Activated CD8-positive, alpha-beta T cell treated with anti-CD3 and anti-CD28 coated beads for 36 hours (primary cell): ENCODE measurements at regions of chr6 and their contacts with region 1.

Region 1: DNA sequence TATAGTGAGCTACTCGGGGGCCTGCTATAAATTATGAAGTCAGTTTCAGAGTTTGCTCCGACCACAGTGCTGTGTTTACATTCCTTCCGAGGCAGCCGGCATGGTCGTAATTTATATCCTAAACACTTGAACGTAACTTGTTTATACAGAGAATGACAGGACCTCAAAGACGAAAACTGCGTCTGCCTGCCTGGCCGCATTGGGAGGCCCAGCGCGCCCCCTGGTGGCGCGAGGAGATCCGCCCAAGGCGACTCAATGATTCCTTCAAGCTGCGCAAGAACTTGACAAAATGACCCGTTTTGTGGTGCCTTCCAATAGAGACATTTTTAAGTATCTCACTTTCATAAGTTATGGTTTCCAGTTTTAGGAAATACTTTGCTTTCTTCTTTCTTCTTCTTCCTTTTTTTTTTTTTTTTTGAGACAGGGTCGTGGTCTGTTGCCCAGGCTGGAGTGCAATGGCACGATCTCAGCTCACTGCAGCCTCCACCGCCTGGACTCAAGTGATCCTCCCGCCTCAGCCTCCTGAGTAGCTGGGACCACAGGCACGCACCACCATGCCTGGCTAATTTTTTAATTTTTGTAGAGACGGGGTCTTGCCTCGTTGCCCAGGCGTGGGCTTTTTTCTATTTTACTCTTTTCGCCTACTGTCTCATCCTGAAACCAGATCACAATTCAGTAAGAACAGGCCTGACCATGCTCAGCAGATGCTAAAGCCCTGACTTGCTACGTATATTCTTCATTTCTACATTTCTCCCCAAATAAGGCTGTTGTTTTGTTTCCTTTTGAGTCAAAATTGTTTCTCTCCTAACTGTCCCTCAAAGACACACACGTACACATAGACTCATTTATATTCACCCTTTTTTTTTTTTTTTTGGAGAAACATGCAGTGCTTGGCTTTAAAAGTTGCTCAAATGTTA is 7.8 kb downstream of the FOXF2 start:
- DNase-seq: peak; percentile 84
- ATAC-seq: peak; percentile 79
- H3K4me3 Mint-ChIP-seq: no peak overlapping the region
- H3K27ac Mint-ChIP-seq: no peak overlapping the region
- H3K4me1 Mint-ChIP-seq: peaks cover 4% of the 10 kb centered on the region
- H3K27me3 Mint-ChIP-seq: peaks cover 45% of the 10 kb centered on the region
- CTCF ChIP-seq: peak; percentile 92

Region 2: DNA sequence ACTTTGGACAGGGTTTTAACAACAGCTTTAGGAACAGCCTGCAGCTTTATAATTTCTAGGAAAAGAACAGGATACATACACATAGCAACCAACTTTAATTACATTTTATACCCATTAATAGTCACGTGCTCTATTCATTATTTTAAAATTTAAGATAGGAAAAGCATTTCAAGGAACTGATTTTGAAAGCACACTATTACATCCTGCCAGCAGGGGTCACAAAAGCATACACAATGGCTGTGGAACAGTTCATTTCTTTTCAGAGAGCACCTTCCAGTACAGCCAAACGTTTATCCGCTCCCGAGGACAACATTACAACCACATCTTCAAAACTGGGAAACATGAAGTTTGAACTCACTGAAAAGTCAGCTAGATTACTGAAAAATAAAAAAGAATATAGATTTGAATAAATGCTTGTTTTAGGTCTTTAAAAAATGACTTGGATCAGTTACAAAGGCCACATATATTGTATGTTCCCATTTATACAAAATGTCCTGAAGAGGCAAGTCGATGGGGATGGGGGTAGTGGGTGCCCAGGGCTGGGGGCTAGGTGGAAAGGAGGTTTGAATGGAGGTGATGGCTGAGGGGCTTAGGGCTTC is 599.6 kb before region 1 on chr6:
- CTCF ChIA-PET with region 1: interaction called, 18 read pairs
- POLR2A ChIA-PET with region 1: no interaction called
- intact Hi-C with region 1: loop called (anchors 5 kb)
- DNase-seq: peak; percentile 65
- ATAC-seq: peak; percentile 75
- H3K4me3 Mint-ChIP-seq: no peak overlapping the region
- H3K27ac Mint-ChIP-seq: no peak overlapping the region
- H3K4me1 Mint-ChIP-seq: no peaks in the 10 kb centered on the region
- H3K27me3 Mint-ChIP-seq: peaks cover 35% of the 10 kb centered on the region
- CTCF ChIP-seq: peak; percentile 91

Region 3: DNA sequence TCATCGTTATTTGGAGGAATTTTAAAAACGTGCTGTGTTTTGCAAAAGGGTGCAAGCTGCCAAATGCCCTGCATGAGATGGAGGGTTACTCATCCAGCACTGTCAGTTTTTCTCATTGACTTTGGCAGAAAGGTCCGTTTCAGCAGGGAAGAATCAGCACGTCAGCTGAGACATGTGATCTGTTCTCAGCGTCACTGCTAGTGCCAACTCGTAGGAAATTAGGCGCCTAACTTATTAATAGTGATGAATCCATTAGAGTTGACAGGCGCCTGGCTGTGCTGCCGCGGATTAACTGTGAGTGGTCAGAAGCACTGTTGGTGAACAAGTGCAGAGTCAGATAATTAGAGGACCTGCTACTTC is 260.8 kb before region 1 on chr6:
- CTCF ChIA-PET with region 1: no interaction called
- POLR2A ChIA-PET with region 1: no interaction called
- intact Hi-C with region 1: no loop called
- DNase-seq: no peak
- ATAC-seq: no peak
- H3K4me3 Mint-ChIP-seq: no peak overlapping the region
- H3K27ac Mint-ChIP-seq: no peak overlapping the region
- H3K4me1 Mint-ChIP-seq: no peaks in the 10 kb centered on the region
- H3K27me3 Mint-ChIP-seq: peaks cover 17% of the 10 kb centered on the region
- CTCF ChIP-seq: no peak

Region 4: GRCh38 chr6:1381481-1382330 is 15.5 kb before region 1 on chr6:
- CTCF ChIA-PET with region 1: interaction called, 22 read pairs
- POLR2A ChIA-PET with region 1: interaction called, 3 read pairs
- intact Hi-C with region 1: no loop called
- DNase-seq: peak; percentile 55
- ATAC-seq: peak; percentile 76
- H3K4me3 Mint-ChIP-seq: no peak overlapping the region
- H3K27ac Mint-ChIP-seq: no peak overlapping the region
- H3K4me1 Mint-ChIP-seq: peaks cover 28% of the 10 kb centered on the region
- H3K27me3 Mint-ChIP-seq: peaks cover 69% of the 10 kb centered on the region
- CTCF ChIP-seq: peak; percentile 95

Region 5: GRCh38 chr6:1412901-1413300 is 15.7 kb after region 1 on chr6:
- CTCF ChIA-PET with region 1: interaction called, 12 read pairs
- POLR2A ChIA-PET with region 1: no interaction called
- intact Hi-C with region 1: no loop called
- DNase-seq: no peak
- ATAC-seq: no peak
- H3K4me3 Mint-ChIP-seq: no peak overlapping the region
- H3K27ac Mint-ChIP-seq: no peak overlapping the region
- H3K4me1 Mint-ChIP-seq: no peaks in the 10 kb centered on the region
- H3K27me3 Mint-ChIP-seq: peaks cover 8% of the 10 kb centered on the region
- CTCF ChIP-seq: no peak

Region 6: GRCh38 chr6:1436334-1437306 is 39.4 kb after region 1 on chr6:
- CTCF ChIA-PET with region 1: interaction called, 11 read pairs
- POLR2A ChIA-PET with region 1: no interaction called
- intact Hi-C with region 1: no loop called
- DNase-seq: peak; percentile 61
- ATAC-seq: peak; percentile 87
- H3K4me3 Mint-ChIP-seq: no peak overlapping the region
- H3K27ac Mint-ChIP-seq: no peak overlapping the region
- H3K4me1 Mint-ChIP-seq: no peaks in the 10 kb centered on the region
- H3K27me3 Mint-ChIP-seq: peaks cover 39% of the 10 kb centered on the region
- CTCF ChIP-seq: peak; percentile 77